ENCODE measurements at regions of chrX and their contacts with region 1.

Region 1: GRCh38 chrX:23344904-23345271 is 10.2 kb downstream of the PTCHD1 start:
- DNase-seq: no peak
- H3K4me3 ChIP-seq: no peak overlapping the region
- H3K27ac ChIP-seq: no peak overlapping the region
- H3K4me1 ChIP-seq: no peaks in the 10 kb centered on the region
- H3K27me3 ChIP-seq: peaks cover 0 to 62% of the 10 kb centered on the region in 2 donors
- CTCF ChIP-seq: no peak
- POLR2A ChIP-seq: no peak

Region 2: DNA sequence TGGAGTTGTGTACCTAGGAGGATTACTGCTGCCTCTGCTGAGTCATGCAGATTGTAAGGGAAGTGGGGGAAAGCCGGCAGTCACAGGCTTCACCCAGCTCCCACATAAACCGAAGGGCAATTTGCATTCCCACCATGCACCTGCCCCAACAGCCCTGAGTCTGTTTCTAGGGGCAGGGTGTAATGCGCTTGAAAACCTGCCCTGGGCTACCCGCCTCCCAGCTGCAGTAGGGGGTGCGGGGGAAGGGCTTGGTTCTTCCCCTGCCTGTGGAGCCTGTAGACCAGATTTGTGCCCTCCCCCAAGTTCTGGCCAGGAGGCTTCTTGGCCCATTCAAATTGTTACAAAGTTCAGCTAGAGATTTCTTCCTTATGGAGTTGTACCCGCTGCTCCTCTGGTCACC is 614.3 kb before region 1 on chrX:
- intact Hi-C with region 1: loop called (anchors 5 kb)
- DNase-seq: no peak
- H3K4me3 ChIP-seq: no peak overlapping the region
- H3K27ac ChIP-seq: no peak overlapping the region
- H3K4me1 ChIP-seq: no peaks in the 10 kb centered on the region
- H3K27me3 ChIP-seq: peaks cover 0 to 9% of the 10 kb centered on the region in 2 donors
- CTCF ChIP-seq: no peak
- POLR2A ChIP-seq: no peak

Region 3: DNA sequence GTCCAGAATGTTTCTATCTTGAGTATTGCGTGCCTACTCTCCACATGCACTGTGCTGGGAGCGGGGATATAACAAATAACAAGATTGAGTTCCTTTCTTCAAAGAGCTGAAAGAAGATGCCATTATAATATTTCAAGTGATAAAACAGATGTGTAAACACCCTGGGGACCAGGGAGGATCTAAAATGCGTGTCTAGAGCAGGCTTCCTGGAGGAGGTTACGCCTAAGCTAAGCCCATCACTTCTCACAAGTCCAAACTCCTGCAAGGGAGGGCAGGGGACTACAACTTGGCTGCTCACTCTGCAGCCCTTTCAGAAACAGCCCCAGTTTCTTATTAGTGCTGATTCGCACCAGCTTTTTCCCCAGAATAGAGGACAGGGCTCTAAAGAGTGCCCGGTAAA is 11.3 kb after region 1 on chrX:
- intact Hi-C with region 1: no loop called
- DNase-seq: no peak
- H3K4me3 ChIP-seq: no peak overlapping the region
- H3K27ac ChIP-seq: no peak overlapping the region
- H3K4me1 ChIP-seq: no peaks in the 10 kb centered on the region
- H3K27me3 ChIP-seq: no peaks in the 10 kb centered on the region
- CTCF ChIP-seq: no peak
- POLR2A ChIP-seq: no peak

Measured in breast epithelium (tissue), 4 donors.